MCF 10A (cell line): ENCODE measurements at regions of chr1 and their contacts with region 1.

Region 1: GRCh38 chr1:206430031-206430983 is 40.0 kb upstream of the IKBKE start:
- DNase-seq: peak; percentile 83
- H3K4me3 Mint-ChIP-seq: no peak overlapping the region
- H3K27ac Mint-ChIP-seq: peak overlapping the region; percentile 90
- H3K4me1 Mint-ChIP-seq: peaks cover 30% of the 10 kb centered on the region
- H3K27me3 Mint-ChIP-seq: no peaks in the 10 kb centered on the region
- CTCF ChIP-seq: peak; percentile 12

Region 2: GRCh38 chr1:206419250-206419649 is 11.1 kb before region 1 on chr1:
- CTCF ChIA-PET with region 1: interaction called, 6 read pairs
- POLR2A ChIA-PET with region 1: interaction called, 26 read pairs
- intact Hi-C with region 1: no loop called
- DNase-seq: peak; percentile 78
- H3K4me3 Mint-ChIP-seq: no peak overlapping the region
- H3K27ac Mint-ChIP-seq: peak overlapping the region; percentile 84
- H3K4me1 Mint-ChIP-seq: peaks cover 14% of the 10 kb centered on the region
- H3K27me3 Mint-ChIP-seq: no peaks in the 10 kb centered on the region
- CTCF ChIP-seq: no peak

Region 3: DNA sequence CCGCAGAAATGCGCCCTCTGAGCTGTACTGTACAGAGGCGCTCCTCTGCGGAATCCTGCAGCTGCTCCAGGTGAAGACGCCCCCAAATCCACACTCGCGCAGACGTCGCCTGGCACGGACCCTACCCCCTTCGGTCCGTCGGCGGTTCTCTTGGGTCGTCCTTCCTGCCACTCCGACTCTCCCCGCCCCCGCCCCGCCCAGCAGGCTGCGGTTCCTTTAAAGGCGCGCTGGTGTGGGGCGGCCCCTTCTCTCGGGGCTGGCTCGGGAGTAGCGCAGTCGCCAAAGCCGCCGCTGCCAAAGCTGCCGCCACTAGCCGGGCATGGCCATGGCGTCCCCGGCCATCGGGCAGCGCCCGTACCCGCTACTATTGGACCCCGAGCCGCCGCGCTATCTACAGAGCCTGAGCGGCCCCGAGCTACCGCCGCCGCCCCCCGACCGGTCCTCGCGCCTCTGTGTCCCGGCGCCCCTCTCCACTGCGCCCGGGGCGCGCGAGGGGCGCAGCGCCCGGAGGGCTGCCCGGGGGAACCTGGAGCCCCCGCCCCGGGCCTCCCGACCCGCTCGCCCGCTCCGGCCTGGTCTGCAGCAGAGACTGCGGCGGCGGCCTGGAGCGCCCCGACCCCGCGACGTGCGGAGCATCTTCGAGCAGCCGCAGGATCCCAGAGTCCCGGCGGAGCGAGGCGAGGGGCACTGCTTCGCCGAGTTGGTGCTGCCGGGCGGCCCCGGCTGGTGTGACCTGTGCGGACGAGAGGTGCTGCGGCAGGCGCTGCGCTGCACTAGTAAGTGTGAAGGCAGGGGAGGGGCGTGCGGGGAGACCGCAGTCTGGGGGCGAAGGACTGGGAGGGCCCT is 77.2 kb after region 1 on chr1 and contains the start of gene RASSF5:
- CTCF ChIA-PET with region 1: no interaction called
- POLR2A ChIA-PET with region 1: no interaction called
- intact Hi-C with region 1: no loop called
- DNase-seq: peak; percentile 87
- H3K4me3 Mint-ChIP-seq: peak within 1 kb of the TSS; percentile 72
- H3K27ac Mint-ChIP-seq: peak within 1 kb of the TSS; percentile 72
- H3K4me1 Mint-ChIP-seq: peaks cover 74% of the 10 kb centered on the region
- H3K27me3 Mint-ChIP-seq: no peaks in the 10 kb centered on the region
- CTCF ChIP-seq: no peak
- total RNA-seq, gene RASSF5: 8.3 and 9.6 TPM in 2 replicates